ENCODE measurements at regions of chr13 and their contacts with region 1.

Region 1: GRCh38 chr13:54511366-54511765 is 1482.8 kb downstream of the OLFM4 start:
- DNase-seq: no peak
- ATAC-seq: no peak
- H3K4me3 ChIP-seq: no peak overlapping the region
- H3K27ac ChIP-seq: no peak overlapping the region
- H3K4me1 ChIP-seq: no peaks in the 10 kb centered on the region
- H3K27me3 ChIP-seq: no peaks in the 10 kb centered on the region
- CTCF ChIP-seq: no peak

Region 2: DNA sequence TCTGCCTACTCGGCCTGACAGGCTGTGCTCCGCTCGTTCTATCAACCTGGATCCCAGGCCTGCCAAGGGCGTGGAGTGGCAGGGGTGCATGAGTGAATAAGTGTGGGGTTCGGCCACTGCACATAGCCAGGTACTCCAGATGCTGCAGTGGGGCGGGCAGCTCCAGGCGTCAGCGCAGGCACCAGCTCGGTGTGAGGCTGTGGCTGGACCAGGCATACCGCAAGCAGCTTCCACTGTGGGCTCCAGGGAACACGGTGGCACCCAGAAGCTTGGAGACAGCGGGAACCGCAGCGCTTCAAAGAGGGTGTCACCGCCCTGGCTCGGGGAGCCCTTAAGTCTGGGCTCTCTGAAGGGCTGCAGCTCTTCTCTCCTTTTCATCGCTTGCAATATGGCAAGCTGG is 147.4 kb after region 1 on chr13:
- CTCF ChIA-PET with region 1: no interaction called
- POLR2A ChIA-PET with region 1: no interaction called
- in situ Hi-C with region 1: no loop called
- intact Hi-C with region 1: no loop called
- DNase-seq: no peak
- ATAC-seq: no peak
- H3K4me3 ChIP-seq: no peak overlapping the region
- H3K27ac ChIP-seq: no peak overlapping the region
- H3K4me1 ChIP-seq: no peaks in the 10 kb centered on the region
- H3K27me3 ChIP-seq: no peaks in the 10 kb centered on the region
- CTCF ChIP-seq: no peak

Region 3: GRCh38 chr13:54775501-54776145 is 264.3 kb after region 1 on chr13:
- CTCF ChIA-PET with region 1: no interaction called
- POLR2A ChIA-PET with region 1: no interaction called
- in situ Hi-C with region 1: no loop called
- intact Hi-C with region 1: no loop called
- DNase-seq: no peak
- ATAC-seq: no peak
- H3K4me3 ChIP-seq: no peak overlapping the region
- H3K27ac ChIP-seq: no peak overlapping the region
- H3K4me1 ChIP-seq: no peaks in the 10 kb centered on the region
- H3K27me3 ChIP-seq: no peaks in the 10 kb centered on the region
- CTCF ChIP-seq: no peak

Region 4: GRCh38 chr13:54802226-54802625 is 290.9 kb after region 1 on chr13:
- CTCF ChIA-PET with region 1: no interaction called
- POLR2A ChIA-PET with region 1: no interaction called
- in situ Hi-C with region 1: no loop called
- intact Hi-C with region 1: no loop called
- DNase-seq: no peak
- ATAC-seq: no peak
- H3K4me3 ChIP-seq: no peak overlapping the region
- H3K27ac ChIP-seq: no peak overlapping the region
- H3K4me1 ChIP-seq: no peaks in the 10 kb centered on the region
- H3K27me3 ChIP-seq: no peaks in the 10 kb centered on the region
- CTCF ChIP-seq: no peak

Region 5: GRCh38 chr13:55013051-55013450 is 501.7 kb after region 1 on chr13:
- CTCF ChIA-PET with region 1: no interaction called
- POLR2A ChIA-PET with region 1: no interaction called
- in situ Hi-C with region 1: no loop called
- intact Hi-C with region 1: no loop called
- DNase-seq: no peak
- ATAC-seq: no peak
- H3K4me3 ChIP-seq: no peak overlapping the region
- H3K27ac ChIP-seq: no peak overlapping the region
- H3K4me1 ChIP-seq: no peaks in the 10 kb centered on the region
- H3K27me3 ChIP-seq: no peaks in the 10 kb centered on the region
- CTCF ChIP-seq: no peak

Region 6: DNA sequence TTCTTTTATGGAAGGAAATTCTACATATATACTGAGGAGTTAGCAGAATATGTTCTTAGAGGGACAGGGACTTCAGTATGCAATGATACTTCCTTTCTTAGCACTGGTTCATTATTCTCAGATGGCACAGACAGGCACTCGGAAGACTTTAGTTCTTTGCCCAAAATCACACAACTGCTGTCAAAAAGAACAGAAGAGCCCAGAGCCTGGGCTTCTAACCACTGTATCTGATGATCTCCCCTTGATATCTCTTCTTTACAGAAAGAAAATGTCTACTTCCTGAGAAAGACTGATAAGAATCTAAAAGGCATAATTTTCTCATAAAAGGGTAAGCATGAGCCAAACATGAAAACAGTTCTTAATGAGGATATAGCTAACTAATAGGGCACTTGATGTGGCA is 595.1 kb after region 1 on chr13:
- CTCF ChIA-PET with region 1: no interaction called
- POLR2A ChIA-PET with region 1: no interaction called
- in situ Hi-C with region 1: no loop called
- intact Hi-C with region 1: loop called (anchors 5 kb)
- DNase-seq: no peak
- ATAC-seq: no peak
- H3K4me3 ChIP-seq: no peak overlapping the region
- H3K27ac ChIP-seq: no peak overlapping the region
- H3K4me1 ChIP-seq: no peaks in the 10 kb centered on the region
- H3K27me3 ChIP-seq: no peaks in the 10 kb centered on the region
- CTCF ChIP-seq: no peak

Measured in Panc1 (cell line).